Left cardiac atrium (tissue), 4 donors: ENCODE measurements at regions of chr2 and their contacts with region 1.

Region 1: GRCh38 chr2:24046930-24047702 is at the start of gene WDCP:
- DNase-seq: peak; percentile 97
- ATAC-seq: peak; percentile 99 to 100
- total RNA-seq, gene WDCP: 5.5 to 6.6 TPM

Region 2: DNA sequence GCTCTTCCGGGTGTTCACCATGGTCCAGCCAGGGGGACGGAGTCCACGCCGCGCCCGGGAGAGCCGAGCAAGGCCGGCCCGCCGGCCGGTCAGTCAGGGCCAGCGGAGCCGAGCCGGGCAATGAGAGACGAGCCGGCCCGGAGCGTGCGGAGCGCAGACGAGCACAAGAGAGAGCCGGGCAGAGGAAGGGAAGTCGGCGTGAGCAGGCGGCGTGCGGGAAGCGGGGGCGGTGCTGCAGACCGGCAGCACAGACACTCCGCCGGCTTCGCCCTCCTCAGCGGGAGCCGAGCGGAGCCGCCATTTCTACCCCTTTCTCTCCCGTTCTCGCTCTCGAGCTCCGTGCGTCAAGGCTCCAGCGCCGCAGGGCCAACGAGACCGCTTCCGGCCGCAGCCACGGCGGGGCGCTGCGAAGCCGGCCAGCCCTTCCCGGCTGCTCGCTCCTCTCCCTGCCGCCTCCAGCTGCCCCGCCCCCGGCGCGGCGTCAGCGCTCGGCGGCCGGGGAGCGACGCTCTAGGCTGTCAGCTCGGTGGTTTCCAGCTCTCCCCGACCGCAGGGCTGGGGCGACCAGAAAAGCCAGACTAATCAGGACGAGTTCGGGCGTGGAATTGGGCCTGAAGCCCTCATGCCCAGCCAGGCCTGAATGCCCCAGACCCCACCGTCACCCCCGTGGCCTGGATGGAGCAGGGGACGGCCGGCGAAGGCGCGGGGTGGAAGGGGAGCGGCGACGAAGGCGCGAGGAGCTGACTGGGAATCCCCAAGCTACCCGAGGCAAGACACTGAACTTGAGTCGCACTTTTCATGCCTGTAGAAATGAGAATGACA is 120.2 kb before region 1 on chr2 and contains the start of gene ATAD2B:
- intact Hi-C with region 1: loop called in 1 of 2 experiments (anchors 5 kb)
- DNase-seq: peak; percentile 91
- ATAC-seq: peak; percentile 95 to 96
- total RNA-seq, gene ATAD2B: 6.5 to 12.1 TPM